Ascending aorta (tissue), 2 donors: ENCODE measurements at regions of chrX and their contacts with region 1.

Region 1: DNA sequence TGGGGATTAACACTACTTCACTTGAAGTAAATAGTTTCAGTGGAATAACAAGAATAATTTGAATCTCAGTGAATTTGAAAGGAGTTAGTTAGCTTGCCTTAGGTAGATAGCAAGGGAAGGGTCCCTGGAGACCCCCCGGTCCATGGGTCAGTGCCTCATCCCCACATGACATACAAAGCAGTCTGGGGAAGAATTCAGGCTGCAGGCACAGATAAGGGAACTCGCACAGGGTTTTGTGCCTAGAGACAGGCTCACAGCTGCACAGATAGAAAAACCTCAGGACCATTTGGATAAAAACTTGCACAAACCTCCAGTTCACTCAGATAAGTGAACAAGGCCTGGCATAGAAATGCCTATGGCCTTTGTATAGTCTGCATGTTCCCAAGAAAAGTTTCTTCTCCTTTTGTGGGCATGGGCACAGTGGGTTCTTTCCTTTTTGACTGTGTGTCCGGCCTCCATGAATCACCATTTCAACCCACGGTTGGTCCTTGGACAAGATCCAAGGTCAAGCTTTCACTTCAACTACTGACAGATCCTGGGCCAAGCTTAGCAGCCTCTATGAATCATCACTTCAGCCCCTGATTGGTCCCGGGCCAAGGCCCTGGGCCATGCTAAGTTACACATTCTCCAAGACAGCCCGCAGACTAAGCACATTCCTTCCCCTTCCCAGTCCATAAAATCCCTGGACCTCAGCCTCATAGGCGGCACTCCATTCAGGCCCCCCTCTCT is 108.3 kb upstream of the KLHL4 start:
- DNase-seq: peak; percentile 46 to 88
- H3K4me3 ChIP-seq: no peak overlapping the region
- H3K27ac ChIP-seq: peak overlapping the region; percentile 31 to 36
- H3K4me1 ChIP-seq: no peaks in the 10 kb centered on the region
- H3K27me3 ChIP-seq: no peaks in the 10 kb centered on the region
- CTCF ChIP-seq: no peak

Region 2: DNA sequence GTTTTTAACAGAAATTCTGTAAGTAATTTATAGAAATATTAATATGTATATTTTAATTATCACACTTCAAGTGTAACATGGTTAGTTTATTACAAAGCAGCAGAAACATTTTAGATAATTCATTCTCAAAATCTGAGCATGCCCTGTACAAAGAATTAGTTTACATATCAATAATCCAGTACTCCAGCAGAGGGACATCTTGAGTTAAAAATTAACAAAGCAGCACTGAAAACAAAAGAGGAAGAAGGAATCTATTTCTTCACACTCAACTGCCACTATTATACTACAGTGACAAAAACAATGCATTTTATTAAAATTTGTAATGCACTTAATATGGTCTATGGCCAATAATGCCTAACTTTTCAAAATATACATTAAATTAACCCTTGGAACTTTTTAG is 70.8 kb before region 1 on chrX:
- intact Hi-C with region 1: no loop called
- DNase-seq: no peak
- H3K4me3 ChIP-seq: no peak overlapping the region
- H3K27ac ChIP-seq: no peak overlapping the region
- H3K4me1 ChIP-seq: no peaks in the 10 kb centered on the region
- H3K27me3 ChIP-seq: no peaks in the 10 kb centered on the region
- CTCF ChIP-seq: peak in 1 of 3 experiments; percentile 34

Region 3: GRCh38 chrX:87434618-87435017 is 25.3 kb after region 1 on chrX:
- intact Hi-C with region 1: loop called (anchors 1 kb)
- DNase-seq: no peak
- H3K4me3 ChIP-seq: no peak overlapping the region
- H3K27ac ChIP-seq: no peak overlapping the region
- H3K4me1 ChIP-seq: no peaks in the 10 kb centered on the region
- H3K27me3 ChIP-seq: no peaks in the 10 kb centered on the region
- CTCF ChIP-seq: no peak

Region 4: GRCh38 chrX:87664381-87664780 is 255.1 kb after region 1 on chrX:
- intact Hi-C with region 1: no loop called
- DNase-seq: no peak
- H3K4me3 ChIP-seq: no peak overlapping the region
- H3K27ac ChIP-seq: no peak overlapping the region
- H3K4me1 ChIP-seq: no peaks in the 10 kb centered on the region
- H3K27me3 ChIP-seq: no peaks in the 10 kb centered on the region
- CTCF ChIP-seq: peak in 2 of 3 experiments; percentile 35 to 56

Region 5: GRCh38 chrX:87805829-87806490 is 396.7 kb after region 1 on chrX:
- intact Hi-C with region 1: loop called (anchors 10 kb)
- DNase-seq: no peak
- H3K4me3 ChIP-seq: peak overlapping the region in 1 of 2 donors; percentile 2
- H3K27ac ChIP-seq: peak overlapping the region; percentile 46 to 60
- H3K4me1 ChIP-seq: peaks cover 3 to 13% of the 10 kb centered on the region in 2 donors
- H3K27me3 ChIP-seq: no peaks in the 10 kb centered on the region
- CTCF ChIP-seq: no peak

Region 6: GRCh38 chrX:89053223-89053622 is 1643.9 kb after region 1 on chrX:
- intact Hi-C with region 1: no loop called
- DNase-seq: no peak
- H3K4me3 ChIP-seq: no peak overlapping the region
- H3K27ac ChIP-seq: no peak overlapping the region
- H3K4me1 ChIP-seq: no peaks in the 10 kb centered on the region
- H3K27me3 ChIP-seq: no peaks in the 10 kb centered on the region
- CTCF ChIP-seq: no peak